ENCODE measurements at regions of chr4 and their contacts with region 1.

Region 1: GRCh38 chr4:147731580-147732517 is at the start of gene ARHGAP10:
- DNase-seq: no peak
- H3K4me3 ChIP-seq: peak within 1 kb of the TSS; percentile 76 to 88
- H3K27ac ChIP-seq: peak within 1 kb of the TSS; percentile 96
- H3K4me1 ChIP-seq: peaks cover 31% of the 10 kb centered on the region
- H3K27me3 ChIP-seq: no peaks in the 10 kb centered on the region
- CTCF ChIP-seq: no peak
- POLR2A ChIP-seq: peak in 1 of 2 donors; percentile 44
- total RNA-seq, gene ARHGAP10: 55.5 TPM

Region 2: DNA sequence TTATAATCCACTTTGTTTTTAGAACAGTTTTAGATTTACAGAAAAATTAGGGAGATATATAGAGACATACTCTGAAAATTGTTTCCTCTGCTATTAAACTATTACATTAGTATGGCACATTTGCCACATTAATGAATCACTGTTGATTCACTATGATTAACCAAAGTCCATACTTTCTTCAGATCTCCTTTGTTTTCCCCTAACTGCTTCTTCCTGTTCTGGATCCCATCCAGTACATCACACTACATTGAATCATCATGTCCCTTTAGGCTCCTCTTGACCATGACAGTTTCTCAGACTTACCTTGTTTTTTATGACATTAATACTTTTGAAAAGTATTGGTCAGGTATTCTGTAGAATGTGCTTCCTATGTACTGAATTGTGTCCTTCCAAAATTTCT is 360.2 kb before region 1 on chr4:
- intact Hi-C with region 1: no loop called
- DNase-seq: no peak
- H3K4me3 ChIP-seq: no peak overlapping the region
- H3K27ac ChIP-seq: no peak overlapping the region
- H3K4me1 ChIP-seq: no peaks in the 10 kb centered on the region
- H3K27me3 ChIP-seq: no peaks in the 10 kb centered on the region
- CTCF ChIP-seq: no peak
- POLR2A ChIP-seq: no peak

Region 3: GRCh38 chr4:147605499-147605898 is 126.3 kb before region 1 on chr4:
- intact Hi-C with region 1: loop called (anchors 5 kb)
- DNase-seq: no peak
- H3K4me3 ChIP-seq: no peak overlapping the region
- H3K27ac ChIP-seq: no peak overlapping the region
- H3K4me1 ChIP-seq: no peaks in the 10 kb centered on the region
- H3K27me3 ChIP-seq: no peaks in the 10 kb centered on the region
- CTCF ChIP-seq: no peak
- POLR2A ChIP-seq: no peak

Region 4: DNA sequence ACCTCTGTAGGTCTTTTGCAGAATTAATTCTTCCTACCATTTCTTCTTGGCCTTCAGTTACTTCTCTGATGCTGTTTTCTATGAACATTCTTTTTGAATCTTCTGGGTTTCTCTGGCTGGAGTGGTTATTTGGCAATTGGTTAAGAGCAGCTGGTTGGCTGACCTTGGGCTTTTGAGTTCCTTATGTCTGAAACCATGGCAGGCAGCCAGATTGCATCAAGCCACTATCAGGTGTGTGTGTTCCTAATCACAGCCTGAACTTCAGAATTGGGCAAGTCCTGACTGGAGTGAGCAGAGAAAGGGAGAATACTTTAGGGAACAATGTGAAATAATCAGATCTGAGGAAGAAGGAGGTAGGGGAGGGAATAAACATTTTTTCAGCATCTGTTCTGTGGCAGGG is 90.3 kb after region 1 on chr4:
- intact Hi-C with region 1: loop called (anchors 10 kb)
- DNase-seq: no peak
- H3K4me3 ChIP-seq: no peak overlapping the region
- H3K27ac ChIP-seq: peak overlapping the region; percentile 27
- H3K4me1 ChIP-seq: peaks cover 49% of the 10 kb centered on the region
- H3K27me3 ChIP-seq: no peaks in the 10 kb centered on the region
- CTCF ChIP-seq: no peak
- POLR2A ChIP-seq: no peak

Region 5: DNA sequence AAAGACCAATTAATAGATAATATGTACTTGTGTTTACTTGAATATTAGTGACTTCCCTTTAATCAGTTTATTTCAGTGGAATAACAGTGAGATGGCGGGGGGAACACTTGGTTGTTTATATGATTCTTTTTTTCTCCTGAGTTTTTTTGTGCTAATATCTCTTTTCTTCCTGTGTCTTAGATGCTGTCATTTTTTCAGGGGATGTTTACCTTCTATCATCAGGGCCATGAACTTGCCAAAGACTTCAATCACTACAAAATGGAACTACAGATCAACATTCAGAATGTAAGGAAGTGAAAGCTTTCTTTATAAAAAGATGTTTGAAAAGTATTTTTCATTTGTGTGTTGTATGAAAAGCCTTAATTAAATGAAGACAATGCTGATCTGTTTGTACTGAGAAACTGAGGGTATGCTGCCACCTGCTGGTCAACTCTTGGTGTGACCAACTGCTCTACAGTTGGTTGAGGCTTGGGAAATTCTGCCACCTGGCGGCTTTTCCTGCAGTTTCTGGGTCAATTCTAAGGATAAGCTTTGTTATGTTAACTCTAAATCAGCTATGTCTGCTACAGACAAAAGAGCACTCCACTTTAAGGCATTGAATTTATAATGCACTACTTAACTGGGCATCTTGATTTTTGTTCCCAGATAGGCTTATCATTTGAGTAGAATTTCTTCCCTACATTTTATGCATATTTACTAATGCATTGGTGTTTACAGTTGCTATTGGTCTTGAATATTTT is 134.9 kb after region 1 on chr4:
- intact Hi-C with region 1: loop called (anchors 10 kb)
- DNase-seq: no peak
- H3K4me3 ChIP-seq: no peak overlapping the region
- H3K27ac ChIP-seq: no peak overlapping the region
- H3K4me1 ChIP-seq: peaks cover 30% of the 10 kb centered on the region
- H3K27me3 ChIP-seq: no peaks in the 10 kb centered on the region
- CTCF ChIP-seq: peak; percentile 98 to 100 (median 100)
- POLR2A ChIP-seq: no peak